ENCODE measurements at regions of chr12 and their contacts with region 1.

Region 1: GRCh38 chr12:110577717-110578521 is 5.2 kb downstream of the PPTC7 start:
- DNase-seq: no peak
- ATAC-seq: no peak
- H3K4me3 ChIP-seq: peak overlapping the region in 1 of 12 donors; percentile 29
- H3K27ac ChIP-seq: peak overlapping the region in 11 of 12 donors; percentile 23 to 98 (median 65)
- H3K4me1 ChIP-seq: peaks cover 2 to 89% (median 53%) of the 10 kb centered on the region in 12 donors
- H3K27me3 ChIP-seq: no peaks in the 10 kb centered on the region
- CTCF ChIP-seq: no peak
- POLR2A ChIP-seq: no peak

Region 2: GRCh38 chr12:110555577-110556406 is 22.1 kb before region 1 on chr12:
- intact Hi-C with region 1: loop called in 1 of 10 experiments (anchors 2 kb)
- DNase-seq: no peak
- ATAC-seq: peak in 3 of 4 donors; percentile 32 to 56 (median 43)
- H3K4me3 ChIP-seq: no peak overlapping the region
- H3K27ac ChIP-seq: peak overlapping the region in 8 of 12 donors; percentile 5 to 57 (median 42)
- H3K4me1 ChIP-seq: peaks cover 0 to 67% (median 30%) of the 10 kb centered on the region in 12 donors
- H3K27me3 ChIP-seq: no peaks in the 10 kb centered on the region
- CTCF ChIP-seq: no peak
- POLR2A ChIP-seq: no peak

Region 3: DNA sequence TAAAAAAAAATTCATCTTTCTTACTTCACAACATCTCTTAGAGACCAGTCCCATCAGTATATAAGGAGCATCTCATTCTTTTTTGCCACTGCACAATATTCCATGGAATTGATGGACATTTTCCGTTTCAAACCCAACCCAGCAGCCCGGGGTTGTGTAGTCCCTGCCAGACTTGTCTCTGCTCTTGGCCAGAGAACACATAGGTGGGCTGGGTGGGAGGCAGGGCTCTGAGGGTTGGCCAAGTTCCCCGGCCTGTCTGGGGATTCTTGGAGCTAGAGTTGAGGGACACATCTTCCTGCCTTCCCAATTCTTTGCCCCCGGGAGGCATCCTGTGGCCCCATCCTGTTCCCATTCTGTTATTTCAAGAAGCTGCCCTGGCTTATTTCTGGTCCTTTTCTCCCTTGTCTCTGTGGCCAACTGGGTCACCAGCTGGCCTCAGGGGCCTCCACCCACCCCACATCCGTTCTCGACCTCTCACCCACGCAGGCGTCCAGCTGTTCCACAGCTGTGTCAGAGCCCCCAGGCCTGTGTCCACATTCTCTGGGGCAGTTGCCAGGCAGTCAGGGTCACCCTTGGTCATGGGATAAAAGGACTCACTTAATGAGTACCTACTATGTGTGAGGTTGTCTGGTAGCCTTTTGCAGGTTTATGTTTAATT is 216.8 kb after region 1 on chr12:
- intact Hi-C with region 1: no loop called
- DNase-seq: peak; percentile 72 to 90 (median 83)
- ATAC-seq: peak; percentile 81 to 93 (median 91)
- H3K4me3 ChIP-seq: no peak overlapping the region
- H3K27ac ChIP-seq: peak overlapping the region in 1 of 12 donors; percentile 40
- H3K4me1 ChIP-seq: peaks cover 0 to 25% (median 17%) of the 10 kb centered on the region in 12 donors
- H3K27me3 ChIP-seq: no peaks in the 10 kb centered on the region
- CTCF ChIP-seq: no peak
- POLR2A ChIP-seq: no peak